ENCODE measurements at regions of chr2 and their contacts with region 1.

Region 1: DNA sequence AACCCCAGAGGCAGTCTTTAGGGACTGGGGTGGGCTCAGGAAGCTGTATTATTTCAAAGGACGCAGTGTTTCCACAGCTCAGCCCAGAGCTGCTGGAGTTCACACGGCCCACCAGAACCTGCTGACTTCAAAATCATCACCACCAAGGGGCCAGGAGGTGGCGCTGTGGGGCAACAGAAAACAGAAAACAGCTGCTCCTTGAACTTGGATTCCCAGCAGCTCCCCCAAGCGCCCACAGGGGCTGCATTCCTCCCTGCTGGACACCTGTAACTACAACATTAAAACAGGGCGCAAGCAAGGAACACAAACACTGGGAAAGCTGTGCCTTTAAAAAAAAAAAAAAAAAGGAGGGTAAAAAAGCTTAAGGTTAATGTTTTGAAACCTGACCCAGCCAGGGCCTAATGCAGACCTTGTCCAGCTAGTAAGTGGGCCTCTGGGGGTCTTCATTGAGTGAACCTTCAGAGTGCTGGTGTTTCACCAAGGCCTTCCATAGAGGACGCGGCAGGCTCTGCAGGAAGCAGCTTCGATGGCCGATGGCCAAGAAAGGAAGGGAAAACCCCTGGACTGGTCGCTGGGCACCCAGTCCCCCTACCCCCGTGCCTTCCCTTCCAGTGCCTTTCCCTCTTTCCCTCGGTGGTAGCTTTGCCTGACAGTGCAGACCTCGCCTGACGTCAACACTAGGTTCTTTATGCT is 25.9 kb downstream of the MLPH start:
- DNase-seq: peak; percentile 88 to 92
- ATAC-seq: peak; percentile 81 to 89 (median 82)
- H3K4me3 ChIP-seq: no peak overlapping the region
- H3K27ac ChIP-seq: peak overlapping the region; percentile 72
- H3K4me1 ChIP-seq: peaks cover 27% of the 10 kb centered on the region
- H3K27me3 ChIP-seq: no peaks in the 10 kb centered on the region
- CTCF ChIP-seq: peak; percentile 92

Region 2: DNA sequence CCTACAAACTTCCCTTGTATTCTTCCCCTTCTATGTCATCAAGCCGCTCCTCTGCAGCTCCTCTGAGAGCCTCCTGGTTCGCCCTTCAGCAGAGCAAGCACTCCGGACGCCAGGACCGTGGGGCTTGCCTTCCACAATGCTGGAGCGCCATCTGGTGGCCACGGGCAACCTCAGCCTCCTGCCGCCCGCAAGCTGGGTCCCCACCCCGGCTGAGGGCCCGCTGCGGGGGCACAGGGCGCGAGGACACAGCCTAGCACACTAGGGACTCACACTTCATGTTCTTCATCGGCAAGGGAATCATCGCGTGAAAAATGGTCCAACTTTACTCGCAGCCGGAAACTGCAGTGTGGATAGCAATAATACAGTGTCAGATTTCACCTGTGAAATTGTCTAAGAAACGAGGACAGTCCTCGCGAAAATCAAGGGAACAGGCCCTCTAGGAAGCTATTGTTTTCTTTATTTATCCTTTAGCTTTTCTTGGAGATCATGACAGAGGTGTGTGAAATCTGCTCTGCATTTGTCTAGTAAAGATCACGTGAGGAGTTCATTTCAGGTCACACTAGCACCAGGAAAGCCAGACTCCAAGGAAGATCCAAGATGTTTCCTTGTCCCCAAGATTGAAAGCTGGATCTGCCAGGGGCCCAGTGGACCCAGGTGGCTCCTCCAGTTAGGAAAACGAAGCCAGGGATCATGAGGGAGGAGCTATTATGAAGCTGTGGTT is 59.3 kb after region 1 on chr2:
- intact Hi-C with region 1: loop called (anchors 1 kb)
- DNase-seq: peak; percentile 92 to 96
- ATAC-seq: peak; percentile 93 to 97 (median 94)
- H3K4me3 ChIP-seq: peak overlapping the region; percentile 43
- H3K27ac ChIP-seq: no peak overlapping the region
- H3K4me1 ChIP-seq: peaks cover 3% of the 10 kb centered on the region
- H3K27me3 ChIP-seq: no peaks in the 10 kb centered on the region
- CTCF ChIP-seq: peak; percentile 100

Region 3: DNA sequence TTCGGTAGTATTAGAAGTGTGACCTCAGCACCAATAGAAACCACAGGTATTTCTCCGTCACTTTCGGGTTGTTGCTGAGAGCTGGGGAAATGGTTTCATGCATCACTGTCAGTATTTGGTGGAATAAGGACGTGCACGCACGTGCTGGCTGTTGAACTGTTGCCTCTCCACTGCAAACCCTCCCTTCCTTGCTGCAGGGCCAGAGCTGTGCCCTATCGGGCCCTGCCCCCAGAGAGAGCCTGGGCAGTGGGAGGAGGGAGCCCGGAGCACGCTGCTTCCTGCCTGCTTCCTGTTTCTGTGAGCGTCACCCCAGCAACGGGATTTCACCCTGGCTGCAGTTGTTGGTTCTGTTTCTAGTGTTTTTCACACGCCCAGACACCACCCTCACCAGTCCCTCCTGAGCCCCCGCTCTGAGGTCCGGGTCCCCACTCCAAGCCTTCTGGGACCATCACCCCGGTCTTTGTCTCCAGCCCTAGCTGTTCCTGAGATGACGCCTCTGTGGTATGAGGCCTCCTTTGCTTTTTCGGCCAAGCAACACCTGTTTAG is 161.9 kb after region 1 on chr2:
- intact Hi-C with region 1: loop called in 1 of 2 experiments (anchors 5 kb)
- DNase-seq: peak; percentile 81 to 87
- ATAC-seq: peak; percentile 69 to 77 (median 75)
- H3K4me3 ChIP-seq: peak overlapping the region; percentile 54
- H3K27ac ChIP-seq: peak overlapping the region; percentile 93
- H3K4me1 ChIP-seq: peaks cover 80% of the 10 kb centered on the region
- H3K27me3 ChIP-seq: no peaks in the 10 kb centered on the region
- CTCF ChIP-seq: peak; percentile 7